ENCODE measurements at regions of chr17 and their contacts with region 1.

Region 1: GRCh38 chr17:80575057-80575875 is 30.6 kb downstream of the RPTOR start:
- DNase-seq: peak; percentile 80
- ATAC-seq: peak; percentile 100
- H3K4me3 ChIP-seq: no peak overlapping the region
- H3K27ac ChIP-seq: no peak overlapping the region
- H3K4me1 ChIP-seq: no peaks in the 10 kb centered on the region
- H3K27me3 ChIP-seq: no peaks in the 10 kb centered on the region
- CTCF ChIP-seq: peak; percentile 100

Region 2: DNA sequence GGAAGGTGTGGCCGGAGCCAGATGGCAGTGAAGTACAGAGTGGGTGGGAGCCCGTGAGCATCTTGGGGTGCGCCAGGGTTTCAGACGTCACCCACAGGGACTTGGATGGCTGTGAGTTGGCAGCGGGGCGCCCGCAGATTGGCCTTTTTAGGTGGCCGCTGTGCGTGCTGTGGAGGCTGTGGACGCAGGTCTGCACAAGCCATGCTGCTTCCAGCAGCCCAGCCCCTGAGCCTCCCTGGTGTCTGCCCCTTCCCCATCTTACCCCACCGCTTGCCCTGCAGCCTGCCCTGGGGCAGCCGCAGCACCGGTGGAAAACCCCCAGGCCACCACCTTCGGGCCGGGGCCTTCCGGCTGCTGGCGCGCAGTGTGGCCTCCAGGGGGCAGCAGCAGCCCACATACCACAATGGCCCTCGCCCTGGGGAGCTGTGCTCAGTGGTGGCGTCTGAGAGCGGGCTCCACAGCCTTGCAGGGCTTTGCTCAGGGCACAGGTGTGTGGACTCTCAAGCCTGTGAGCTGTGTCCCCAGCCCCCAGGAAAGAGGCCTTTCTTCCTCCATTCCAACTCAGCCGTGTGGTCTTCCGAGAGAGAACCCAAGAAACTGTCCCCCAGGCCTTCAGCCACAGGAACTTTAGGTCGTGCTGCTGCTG is 148.5 kb before region 1 on chr17:
- CTCF ChIA-PET with region 1: interaction called, 4 read pairs
- POLR2A ChIA-PET with region 1: no interaction called
- in situ Hi-C with region 1: no loop called
- intact Hi-C with region 1: loop called (anchors 2 kb)
- DNase-seq: peak; percentile 30
- ATAC-seq: peak; percentile 89
- H3K4me3 ChIP-seq: no peak overlapping the region
- H3K27ac ChIP-seq: no peak overlapping the region
- H3K4me1 ChIP-seq: no peaks in the 10 kb centered on the region
- H3K27me3 ChIP-seq: no peaks in the 10 kb centered on the region
- CTCF ChIP-seq: peak; percentile 99

Region 3: DNA sequence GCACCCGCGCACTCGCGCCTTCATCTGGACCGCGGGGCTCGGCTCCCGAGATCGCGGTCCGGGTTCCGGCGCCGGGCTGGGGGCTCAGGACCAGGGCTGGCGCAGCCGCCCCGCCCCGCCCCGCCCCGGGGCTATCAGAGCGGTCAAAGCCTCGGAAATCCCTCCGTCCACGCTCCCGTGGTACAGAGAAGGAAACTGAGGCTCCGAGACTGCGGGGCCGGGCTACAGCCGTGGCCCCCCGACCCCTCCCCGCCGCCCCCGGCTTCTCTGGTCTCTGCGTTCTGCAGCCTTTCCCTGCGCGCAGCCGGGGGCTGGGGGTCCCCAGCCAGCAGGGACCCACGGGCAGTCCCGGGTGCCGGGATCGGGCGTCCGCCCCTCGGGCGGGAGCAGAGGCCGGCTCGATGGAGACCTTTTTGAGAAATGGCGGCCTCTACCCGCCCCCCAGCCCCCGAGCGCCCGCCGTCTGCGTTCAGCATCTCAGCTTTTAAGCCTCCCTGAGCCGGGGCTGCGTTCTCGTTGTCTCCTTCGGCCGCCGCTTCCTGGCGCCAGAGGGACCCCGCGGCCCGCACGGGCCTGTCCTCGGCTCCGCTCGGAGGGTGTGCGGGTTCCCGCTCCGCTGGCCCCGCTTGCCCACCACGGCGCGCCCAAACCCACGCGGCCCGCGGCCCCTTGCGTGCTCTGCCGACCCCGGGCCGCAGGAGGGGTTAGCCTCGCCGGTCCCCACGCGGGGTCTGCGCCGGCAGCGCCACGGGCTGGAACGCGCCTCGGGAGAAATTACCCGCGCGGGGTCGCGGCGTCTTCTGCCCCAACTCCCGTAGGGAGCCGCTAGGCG is 97.4 kb before region 1 on chr17:
- CTCF ChIA-PET with region 1: no interaction called
- POLR2A ChIA-PET with region 1: no interaction called
- in situ Hi-C with region 1: no loop called
- intact Hi-C with region 1: loop called (anchors 10 kb)
- DNase-seq: no peak
- ATAC-seq: no peak
- H3K4me3 ChIP-seq: peak overlapping the region in 1 of 2 experiments; percentile 37; a peak in 1 of 4 replicates
- H3K27ac ChIP-seq: no peak overlapping the region
- H3K4me1 ChIP-seq: peaks cover 13% of the 10 kb centered on the region
- H3K27me3 ChIP-seq: peaks cover 2% of the 10 kb centered on the region; the same call in 1 of the 2 replicates
- CTCF ChIP-seq: no peak; the same call in 1 of the 2 replicates

Region 4: GRCh38 chr17:80632046-80632581 is 56.8 kb after region 1 on chr17:
- CTCF ChIA-PET with region 1: no interaction called
- POLR2A ChIA-PET with region 1: no interaction called
- in situ Hi-C with region 1: no loop called
- intact Hi-C with region 1: no loop called
- DNase-seq: no peak
- ATAC-seq: no peak
- H3K4me3 ChIP-seq: no peak overlapping the region
- H3K27ac ChIP-seq: no peak overlapping the region
- H3K4me1 ChIP-seq: no peaks in the 10 kb centered on the region
- H3K27me3 ChIP-seq: no peaks in the 10 kb centered on the region
- CTCF ChIP-seq: no peak

Region 5: DNA sequence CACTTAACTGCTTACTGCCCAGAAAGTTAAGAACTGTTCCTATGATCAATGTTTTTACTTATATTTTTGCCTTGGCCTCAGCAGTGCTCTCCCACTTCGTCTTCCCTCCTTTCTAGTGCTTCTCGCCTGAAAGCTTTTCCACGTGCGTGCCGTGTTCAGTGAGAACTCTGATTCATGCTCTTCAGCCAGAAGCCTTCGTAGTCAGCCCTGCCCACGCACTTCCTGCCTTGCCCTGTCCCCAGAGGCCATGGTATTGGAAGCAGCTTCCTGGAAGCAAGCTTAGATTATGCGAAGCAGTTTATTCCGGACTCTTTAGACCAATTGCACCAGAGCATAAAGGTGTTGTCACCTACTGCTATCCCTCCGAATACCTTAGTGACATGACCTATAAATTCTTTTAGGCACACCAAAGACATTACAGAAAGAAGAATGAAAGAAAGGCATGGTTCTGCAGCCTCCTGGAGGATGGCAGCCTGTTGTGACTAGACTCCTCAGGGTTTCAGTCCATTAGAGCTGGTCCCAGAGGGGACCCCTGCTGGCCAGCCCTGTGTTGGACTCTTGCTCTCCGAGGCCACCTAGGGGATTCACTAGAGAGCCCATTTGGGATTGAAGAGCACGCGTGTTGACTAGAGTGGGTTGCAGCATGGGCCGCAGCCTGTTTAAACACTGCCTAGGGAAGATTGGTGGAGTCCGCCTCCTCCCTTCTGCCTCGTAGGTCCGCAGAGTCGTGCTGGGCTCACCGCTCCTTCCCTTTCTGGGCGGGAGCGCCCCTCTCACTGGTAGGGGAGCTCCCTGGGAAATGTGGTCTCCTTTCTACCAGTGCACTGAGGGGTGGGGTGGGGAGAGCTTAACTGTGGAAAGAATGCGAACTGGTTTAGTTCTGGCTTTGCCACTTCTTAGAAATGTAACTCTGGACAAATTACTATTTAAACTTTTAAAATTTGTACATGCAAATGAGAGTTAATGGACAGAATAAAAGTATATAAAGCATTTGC is 74.7 kb after region 1 on chr17:
- CTCF ChIA-PET with region 1: no interaction called
- POLR2A ChIA-PET with region 1: no interaction called
- in situ Hi-C with region 1: no loop called
- intact Hi-C with region 1: no loop called
- DNase-seq: no peak
- ATAC-seq: peak; percentile 79
- H3K4me3 ChIP-seq: no peak overlapping the region
- H3K27ac ChIP-seq: no peak overlapping the region
- H3K4me1 ChIP-seq: peaks cover 2% of the 10 kb centered on the region; the same call in 1 of the 2 replicates
- H3K27me3 ChIP-seq: no peaks in the 10 kb centered on the region
- CTCF ChIP-seq: peak; percentile 76